ENCODE measurements at regions of chr10 and their contacts with region 1.

Region 1: DNA sequence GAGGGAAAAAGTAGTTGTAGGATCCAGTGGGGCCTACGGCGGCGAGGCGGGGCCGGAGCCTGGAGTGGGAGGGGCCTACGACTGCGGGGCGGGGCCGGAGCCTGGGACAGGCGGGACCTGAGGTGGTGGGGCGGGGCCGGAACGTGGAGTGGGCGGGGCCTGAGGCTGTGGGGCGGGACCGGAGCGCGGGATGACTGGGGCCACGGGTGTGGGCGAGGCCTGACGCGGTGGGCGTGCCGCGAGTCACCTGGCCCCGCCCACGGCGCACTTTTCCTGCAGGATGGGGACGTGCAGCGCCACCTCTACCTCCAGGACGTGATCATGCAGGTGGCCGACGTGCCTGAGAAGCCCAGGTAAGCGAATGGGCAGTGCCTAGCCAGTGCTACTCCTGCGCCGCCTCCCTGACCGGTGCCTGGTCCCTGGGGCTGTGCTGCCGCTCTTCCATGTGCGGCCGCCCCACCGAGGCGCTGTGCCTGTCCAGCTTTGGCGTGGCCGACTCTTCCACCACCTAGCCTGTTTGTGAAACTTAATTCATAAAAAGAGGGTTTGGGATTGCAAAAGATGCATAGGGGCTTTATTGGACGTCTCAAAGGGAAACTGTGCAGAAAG is 501 bp downstream of the ZNF511 start:
- DNase-seq: peak; percentile 92 to 97 (median 94)
- H3K4me3 ChIP-seq: peak overlapping the region in 1 of 2 donors; percentile 87
- H3K4me3 Mint-ChIP-seq: peak overlapping the region; percentile 67 to 83 (median 73)
- H3K27ac ChIP-seq: peak overlapping the region; percentile 97
- H3K27ac Mint-ChIP-seq: peak overlapping the region; percentile 80 to 91 (median 87)
- H3K4me1 ChIP-seq: peaks cover 23% of the 10 kb centered on the region
- H3K4me1 Mint-ChIP-seq: peaks cover 17 to 42% (median 28%) of the 10 kb centered on the region in 4 donors
- H3K27me3 ChIP-seq: no peaks in the 10 kb centered on the region
- H3K27me3 Mint-ChIP-seq: peaks cover 0 to 6% of the 10 kb centered on the region in 2 donors

Region 2: DNA sequence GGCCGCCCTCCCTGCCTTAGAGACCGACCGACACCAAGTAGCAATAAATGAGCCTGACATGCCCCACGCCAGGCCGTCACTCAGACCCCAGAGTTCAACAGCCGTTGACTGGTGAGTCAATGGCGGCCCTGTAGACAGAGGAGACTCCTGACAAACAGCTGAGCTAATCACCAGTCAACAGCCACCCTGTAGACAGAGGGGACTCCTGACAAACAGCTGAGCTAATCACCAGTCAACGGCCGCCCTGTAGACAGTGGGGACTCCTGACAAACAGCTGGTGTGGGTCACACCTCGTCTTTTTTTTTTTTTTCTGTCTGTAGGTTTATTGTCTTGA is 166.0 kb before region 1 on chr10:
- CTCF ChIA-PET with region 1: interaction called, 16 read pairs
- POLR2A ChIA-PET with region 1: no interaction called
- intact Hi-C with region 1: loop called (anchors 1 kb)
- DNase-seq: no peak
- H3K4me3 ChIP-seq: no peak overlapping the region
- H3K4me3 Mint-ChIP-seq: no peak overlapping the region
- H3K27ac ChIP-seq: no peak overlapping the region
- H3K27ac Mint-ChIP-seq: no peak overlapping the region
- H3K4me1 ChIP-seq: no peaks in the 10 kb centered on the region
- H3K4me1 Mint-ChIP-seq: peaks cover 4 to 11% (median 7%) of the 10 kb centered on the region in 4 donors
- H3K27me3 ChIP-seq: no peaks in the 10 kb centered on the region
- H3K27me3 Mint-ChIP-seq: peaks cover 27 to 35% of the 10 kb centered on the region in 2 donors

Region 3: DNA sequence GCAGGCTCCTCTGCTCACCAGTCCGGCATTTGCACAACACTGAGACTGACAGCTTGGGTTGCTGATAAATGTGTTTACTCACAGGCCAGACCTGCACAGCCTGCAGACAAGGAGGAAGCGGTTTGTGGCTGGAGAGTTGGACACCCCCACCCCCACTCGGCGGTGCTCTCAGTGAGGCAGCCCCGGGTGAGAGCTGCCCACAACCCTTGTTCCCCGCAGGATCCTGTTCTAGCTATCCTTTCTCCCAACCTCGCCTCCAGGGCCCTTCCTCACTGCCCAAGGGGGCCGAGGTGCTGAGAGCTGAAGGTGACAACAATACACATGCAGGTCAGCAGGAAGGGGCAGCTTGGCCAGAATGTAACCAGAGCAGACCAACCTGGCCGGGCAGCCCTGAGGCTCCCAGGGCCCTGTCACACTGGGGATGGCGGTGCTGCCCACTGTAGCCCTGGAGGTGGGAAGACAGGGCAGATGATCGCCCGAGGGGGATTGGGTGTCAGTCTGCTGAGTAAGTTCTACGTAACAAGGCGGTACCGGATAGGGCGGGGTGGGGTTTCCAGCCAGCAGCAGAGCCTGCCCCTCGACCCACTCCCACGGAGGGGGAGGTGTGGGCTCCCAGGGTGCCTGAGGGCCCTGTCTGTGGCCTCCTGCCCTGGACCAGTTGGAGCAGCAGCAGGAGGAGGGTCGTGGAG is 30.5 kb before region 1 on chr10:
- CTCF ChIA-PET with region 1: interaction called, 19 read pairs
- POLR2A ChIA-PET with region 1: interaction called, 18 read pairs
- intact Hi-C with region 1: loop called (anchors 1 kb)
- DNase-seq: peak; percentile 73 to 89 (median 77)
- H3K4me3 ChIP-seq: peak overlapping the region in 1 of 2 donors; percentile 3
- H3K4me3 Mint-ChIP-seq: peak overlapping the region; percentile 80 to 96 (median 89)
- H3K27ac ChIP-seq: peak overlapping the region; percentile 99
- H3K27ac Mint-ChIP-seq: peak overlapping the region; percentile 95 to 99 (median 98)
- H3K4me1 ChIP-seq: peaks cover 50% of the 10 kb centered on the region
- H3K4me1 Mint-ChIP-seq: peaks cover 15 to 48% (median 35%) of the 10 kb centered on the region in 4 donors
- H3K27me3 ChIP-seq: no peaks in the 10 kb centered on the region
- H3K27me3 Mint-ChIP-seq: no peaks in the 10 kb centered on the region

Region 4: DNA sequence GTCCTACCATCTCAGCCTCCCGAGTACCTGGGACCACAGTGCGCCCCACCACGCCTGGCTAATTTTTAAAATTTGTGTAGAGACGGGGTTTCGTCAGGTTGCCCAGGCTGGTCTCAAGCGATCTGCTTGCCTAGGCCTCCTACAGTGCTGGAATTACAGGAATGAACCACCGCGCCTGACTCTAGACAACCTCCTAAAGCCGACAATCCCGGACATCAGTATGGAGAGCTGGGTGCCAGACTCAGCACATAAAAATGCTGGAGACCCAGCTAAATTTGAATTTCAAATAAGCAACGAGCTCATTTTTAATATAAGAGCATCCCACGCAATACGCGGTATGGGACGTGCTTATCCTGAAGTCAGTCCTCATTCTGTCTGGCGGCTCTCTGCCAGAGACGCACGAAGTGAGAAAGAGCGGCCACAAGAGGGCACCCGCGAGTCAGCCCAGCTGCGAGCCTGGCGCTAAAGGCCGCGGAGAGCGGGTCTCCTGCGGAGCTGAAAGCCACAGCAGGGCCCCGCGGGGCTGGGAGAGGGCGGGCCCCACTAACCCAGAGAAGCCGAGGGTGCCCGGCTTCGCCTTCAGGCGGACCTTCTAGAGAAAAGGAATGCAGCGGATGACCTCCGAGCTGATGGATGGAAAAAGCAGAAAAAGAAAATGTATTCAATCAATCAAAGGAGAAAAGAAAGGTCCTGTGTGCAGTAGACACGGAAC is 20.4 kb after region 1 on chr10:
- CTCF ChIA-PET with region 1: interaction called, 28 read pairs
- POLR2A ChIA-PET with region 1: interaction called, 3 read pairs
- intact Hi-C with region 1: no loop called
- DNase-seq: peak; percentile 77 to 84 (median 81)
- H3K4me3 ChIP-seq: no peak overlapping the region
- H3K4me3 Mint-ChIP-seq: peak overlapping the region in 5 of 8 donors; percentile 21 to 63 (median 32)
- H3K27ac ChIP-seq: no peak overlapping the region
- H3K27ac Mint-ChIP-seq: peak overlapping the region in 2 of 7 donors; percentile 35 to 79
- H3K4me1 ChIP-seq: peaks cover 24% of the 10 kb centered on the region
- H3K4me1 Mint-ChIP-seq: peaks cover 3 to 31% (median 12%) of the 10 kb centered on the region in 4 donors
- H3K27me3 ChIP-seq: peaks cover 31% of the 10 kb centered on the region
- H3K27me3 Mint-ChIP-seq: peaks cover 13 to 18% of the 10 kb centered on the region in 2 donors

Region 5: GRCh38 chr10:133357285-133358151 is 48.3 kb after region 1 on chr10 and contains the start of gene FUOM:
- CTCF ChIA-PET with region 1: no interaction called
- POLR2A ChIA-PET with region 1: no interaction called
- intact Hi-C with region 1: loop called (anchors 1 kb)
- DNase-seq: peak; percentile 76 to 79 (median 77)
- H3K4me3 ChIP-seq: peak within 1 kb of the TSS in 1 of 2 donors; percentile 63
- H3K4me3 Mint-ChIP-seq: peak within 1 kb of the TSS; percentile 67 to 82 (median 78)
- H3K27ac ChIP-seq: peak within 1 kb of the TSS; percentile 52
- H3K27ac Mint-ChIP-seq: peak within 1 kb of the TSS in 4 of 7 donors; percentile 43 to 62 (median 56)
- H3K4me1 ChIP-seq: peaks cover 8% of the 10 kb centered on the region
- H3K4me1 Mint-ChIP-seq: peaks cover 0 to 9% (median 5%) of the 10 kb centered on the region in 4 donors
- H3K27me3 ChIP-seq: no peaks in the 10 kb centered on the region
- H3K27me3 Mint-ChIP-seq: no peaks in the 10 kb centered on the region
- total RNA-seq, gene FUOM: 17.1 to 18.1 TPM

Region 6: DNA sequence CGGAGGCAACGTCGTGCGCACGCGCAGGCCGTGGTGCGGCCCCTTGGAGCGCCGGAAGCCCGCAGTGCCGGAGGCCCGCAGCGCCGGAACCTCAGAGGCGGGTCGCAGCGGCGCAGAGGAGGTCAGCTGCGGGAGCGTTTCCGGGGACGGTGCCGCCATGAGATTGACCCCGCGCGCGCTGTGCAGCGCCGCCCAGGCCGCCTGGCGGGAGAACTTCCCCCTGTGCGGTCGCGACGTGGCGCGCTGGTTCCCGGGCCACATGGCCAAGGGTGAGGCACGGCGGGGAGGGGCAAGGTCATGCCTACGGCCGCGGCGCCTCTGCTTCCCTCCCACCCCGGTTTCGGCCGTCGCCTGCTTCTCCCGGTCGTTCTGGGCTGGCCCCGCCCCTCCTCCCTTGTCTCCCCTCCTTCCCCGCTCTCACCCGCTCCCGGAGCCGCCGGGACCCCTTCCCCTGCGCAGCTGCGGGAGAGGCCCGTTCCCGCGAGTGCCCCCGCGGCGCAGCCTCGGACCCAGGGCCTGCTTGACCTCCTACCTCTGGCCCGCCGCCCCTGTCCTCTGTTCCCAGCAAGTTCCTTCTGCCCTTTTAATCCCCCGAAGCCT is 84.9 kb after region 1 on chr10 and contains the start of gene MTG1:
- CTCF ChIA-PET with region 1: interaction called, 7 read pairs
- POLR2A ChIA-PET with region 1: interaction called, 4 read pairs
- intact Hi-C with region 1: loop called (anchors 2 kb)
- DNase-seq: peak; percentile 85 to 93 (median 89)
- H3K4me3 ChIP-seq: peak within 1 kb of the TSS; percentile 69 to 89
- H3K4me3 Mint-ChIP-seq: peak within 1 kb of the TSS; percentile 88 to 95 (median 90)
- H3K27ac ChIP-seq: peak within 1 kb of the TSS; percentile 78
- H3K27ac Mint-ChIP-seq: peak within 1 kb of the TSS; percentile 83 to 94 (median 88)
- H3K4me1 ChIP-seq: peaks cover 60% of the 10 kb centered on the region
- H3K4me1 Mint-ChIP-seq: peaks cover 28 to 65% (median 44%) of the 10 kb centered on the region in 4 donors
- H3K27me3 ChIP-seq: no peaks in the 10 kb centered on the region
- H3K27me3 Mint-ChIP-seq: no peaks in the 10 kb centered on the region
- total RNA-seq, gene MTG1: 64.8 to 65.4 TPM